Mammary epithelial cell (primary cell): ENCODE measurements at regions of chr22 and their contacts with region 1.

Region 1: DNA sequence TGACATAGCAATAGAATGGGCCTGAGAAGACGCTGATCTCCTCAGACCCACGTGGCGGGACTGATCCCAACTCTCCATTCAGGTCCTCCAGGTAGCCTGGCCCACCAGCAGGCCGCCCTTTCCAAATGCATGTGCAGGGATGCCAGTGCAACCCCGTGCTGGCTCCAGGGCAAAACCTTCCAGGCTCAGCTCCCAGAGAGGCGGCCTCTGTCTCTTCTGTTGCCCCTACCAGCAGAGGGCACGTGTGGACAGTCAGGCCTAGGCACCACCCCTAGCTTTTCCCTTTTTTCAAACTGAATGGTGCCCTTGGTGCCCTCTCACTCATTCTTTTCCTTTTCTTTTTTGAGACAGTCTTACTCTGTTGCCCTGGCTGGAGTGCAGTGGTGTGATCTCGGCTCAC is 121.7 kb downstream of the OSBP2 start:
- DNase-seq: no peak
- H3K4me3 ChIP-seq: no peak overlapping the region
- H3K27ac ChIP-seq: no peak overlapping the region
- H3K4me1 ChIP-seq: no peaks in the 10 kb centered on the region
- H3K27me3 ChIP-seq: no peaks in the 10 kb centered on the region
- CTCF ChIP-seq: peak; percentile 3 to 36

Region 2: GRCh38 chr22:30348809-30349208 is 467.6 kb before region 1 on chr22:
- CTCF ChIA-PET with region 1: no interaction called
- dilution Hi-C with region 1: no loop called
- in situ Hi-C with region 1: no loop called
- intact Hi-C with region 1: no loop called
- DNase-seq: no peak
- H3K4me3 ChIP-seq: no peak overlapping the region
- H3K27ac ChIP-seq: no peak overlapping the region
- H3K4me1 ChIP-seq: no peaks in the 10 kb centered on the region
- H3K27me3 ChIP-seq: no peaks in the 10 kb centered on the region
- CTCF ChIP-seq: no peak

Region 3: DNA sequence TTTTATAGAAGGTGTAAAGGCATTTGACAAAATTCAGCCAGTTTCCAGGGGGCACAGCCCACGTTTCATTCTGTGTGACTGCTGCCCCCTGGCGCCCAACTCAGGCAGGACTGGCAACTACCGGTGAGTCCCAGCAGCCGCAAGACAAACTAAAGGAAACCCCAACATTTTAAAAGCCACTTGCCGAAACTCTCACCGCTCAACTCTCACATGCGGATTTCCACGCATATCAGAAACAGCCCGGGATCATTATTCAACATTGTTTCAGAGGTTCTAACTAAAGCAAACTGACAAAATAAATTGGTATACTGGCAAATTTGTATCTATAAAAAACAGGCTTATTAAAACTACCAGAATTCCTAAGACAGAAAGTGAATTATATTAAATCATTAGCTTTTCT is 104.0 kb after region 1 on chr22:
- CTCF ChIA-PET with region 1: interaction called, 5 read pairs
- dilution Hi-C with region 1: no loop called
- in situ Hi-C with region 1: no loop called
- intact Hi-C with region 1: loop called (anchors 1 kb)
- DNase-seq: peak; percentile 52
- H3K4me3 ChIP-seq: no peak overlapping the region
- H3K27ac ChIP-seq: no peak overlapping the region
- H3K4me1 ChIP-seq: peaks cover 9% of the 10 kb centered on the region
- H3K27me3 ChIP-seq: no peaks in the 10 kb centered on the region
- CTCF ChIP-seq: peak; percentile 75 to 89

Region 4: GRCh38 chr22:31075961-31076360 is 259.5 kb after region 1 on chr22:
- CTCF ChIA-PET with region 1: no interaction called
- dilution Hi-C with region 1: no loop called
- in situ Hi-C with region 1: no loop called
- intact Hi-C with region 1: no loop called
- DNase-seq: no peak
- H3K4me3 ChIP-seq: no peak overlapping the region
- H3K27ac ChIP-seq: no peak overlapping the region
- H3K4me1 ChIP-seq: peaks cover 5% of the 10 kb centered on the region
- H3K27me3 ChIP-seq: no peaks in the 10 kb centered on the region
- CTCF ChIP-seq: no peak